Motor neuron (in vitro differentiated cells): ENCODE measurements at regions of chr22 and their contacts with region 1.

Region 1: DNA sequence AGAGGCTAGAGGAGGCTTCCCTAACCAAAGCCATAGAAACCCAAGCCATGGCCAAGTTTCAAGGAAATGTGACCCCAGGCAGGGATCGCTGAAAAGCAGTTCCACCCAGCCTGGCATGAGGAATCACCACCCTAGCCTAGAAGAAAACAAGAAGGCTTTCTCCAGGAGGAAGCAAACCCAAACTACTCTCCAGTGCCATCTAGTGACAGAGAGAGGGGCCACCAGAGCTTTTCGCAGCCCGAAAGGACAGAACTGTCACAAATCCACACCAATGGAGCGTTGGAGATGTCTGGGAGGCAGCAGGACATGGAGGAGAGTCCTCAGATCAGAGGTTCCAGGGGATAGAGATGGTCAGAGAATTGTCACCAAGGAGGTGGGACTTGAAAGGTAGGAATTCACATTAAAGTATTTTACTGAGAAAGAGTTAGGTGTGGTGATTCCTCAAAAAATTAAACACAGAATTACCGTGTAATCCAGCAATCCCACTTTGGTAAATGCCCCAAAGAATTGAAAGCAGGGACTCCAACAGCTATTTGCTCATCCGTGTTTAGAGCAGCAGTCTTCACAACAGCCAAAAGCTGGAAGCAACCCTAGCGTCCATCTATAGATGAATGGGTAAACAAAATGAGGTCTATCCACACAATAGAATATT is 67.3 kb upstream of the NUP50 start:
- ATAC-seq: peak; percentile 62 to 95 (median 82)
- H3K4me3 ChIP-seq: no peak overlapping the region
- H3K27ac ChIP-seq: no peak overlapping the region
- H3K4me1 ChIP-seq: no peaks in the 10 kb centered on the region

Region 2: GRCh38 chr22:44807915-44808690 is 288.3 kb before region 1 on chr22:
- in situ Hi-C with region 1: loop called in 2 of 9 experiments (anchors 25 kb)
- ATAC-seq: peak in 1 of 8 experiments; percentile 60
- H3K4me3 ChIP-seq: no peak overlapping the region
- H3K27ac ChIP-seq: no peak overlapping the region
- H3K4me1 ChIP-seq: no peaks in the 10 kb centered on the region